Upper lobe of right lung (tissue), 1 donor: ENCODE measurements at regions of chr17 and their contacts with region 1.

Region 1: GRCh38 chr17:77208217-77208808 is 67.5 kb downstream of the SEC14L1 start:
- DNase-seq: no peak
- ATAC-seq: peak; percentile 37
- H3K4me3 ChIP-seq: no peak overlapping the region
- H3K27ac ChIP-seq: peak overlapping the region; percentile 37
- H3K4me1 ChIP-seq: peaks cover 27% of the 10 kb centered on the region
- H3K27me3 ChIP-seq: no peaks in the 10 kb centered on the region
- CTCF ChIP-seq: peak; percentile 19

Region 2: DNA sequence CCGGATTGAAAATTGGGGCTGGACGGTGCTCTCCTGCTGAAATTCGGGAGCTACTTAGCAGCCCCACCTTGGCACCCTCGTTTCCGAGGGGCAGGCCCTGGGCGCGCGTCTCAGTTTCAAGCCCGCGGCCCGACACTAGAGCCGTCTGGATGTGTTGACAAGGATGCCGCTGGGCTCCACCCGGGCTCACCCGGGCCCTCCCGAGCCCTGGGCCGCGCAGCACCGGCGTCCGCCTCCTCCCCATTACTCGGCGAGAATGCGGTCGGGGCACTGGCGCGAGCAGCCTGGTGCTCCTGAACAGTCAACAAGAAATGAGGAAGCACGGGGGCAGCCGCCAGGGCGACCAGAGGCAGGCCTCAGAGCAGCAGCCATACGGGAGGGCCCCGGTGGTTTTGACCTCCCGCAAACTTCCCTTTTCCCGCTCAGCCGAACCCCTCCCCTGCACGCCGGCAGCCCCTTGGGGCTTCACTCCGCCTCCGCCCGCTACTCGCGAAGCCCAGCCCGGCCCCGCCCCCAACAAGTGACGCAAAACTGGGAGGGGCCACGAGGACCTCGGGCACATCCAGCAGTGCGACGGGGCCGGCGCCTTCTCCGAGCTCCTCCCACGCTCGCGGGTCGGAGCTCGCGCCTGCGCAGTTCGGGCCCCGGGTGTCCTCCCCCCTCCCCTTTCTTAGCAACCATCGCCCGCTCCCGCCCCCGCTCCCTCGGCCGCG is 68.0 kb before region 1 on chr17:
- intact Hi-C with region 1: loop called (anchors 10 kb)
- DNase-seq: peak; percentile 100
- ATAC-seq: peak; percentile 97
- H3K4me3 ChIP-seq: peak overlapping the region; percentile 75
- H3K27ac ChIP-seq: peak overlapping the region; percentile 91
- H3K4me1 ChIP-seq: peaks cover 34% of the 10 kb centered on the region
- H3K27me3 ChIP-seq: no peaks in the 10 kb centered on the region
- CTCF ChIP-seq: no peak